PC-3 (cell line): ENCODE measurements at regions of chr3 and their contacts with region 1.

Region 1: DNA sequence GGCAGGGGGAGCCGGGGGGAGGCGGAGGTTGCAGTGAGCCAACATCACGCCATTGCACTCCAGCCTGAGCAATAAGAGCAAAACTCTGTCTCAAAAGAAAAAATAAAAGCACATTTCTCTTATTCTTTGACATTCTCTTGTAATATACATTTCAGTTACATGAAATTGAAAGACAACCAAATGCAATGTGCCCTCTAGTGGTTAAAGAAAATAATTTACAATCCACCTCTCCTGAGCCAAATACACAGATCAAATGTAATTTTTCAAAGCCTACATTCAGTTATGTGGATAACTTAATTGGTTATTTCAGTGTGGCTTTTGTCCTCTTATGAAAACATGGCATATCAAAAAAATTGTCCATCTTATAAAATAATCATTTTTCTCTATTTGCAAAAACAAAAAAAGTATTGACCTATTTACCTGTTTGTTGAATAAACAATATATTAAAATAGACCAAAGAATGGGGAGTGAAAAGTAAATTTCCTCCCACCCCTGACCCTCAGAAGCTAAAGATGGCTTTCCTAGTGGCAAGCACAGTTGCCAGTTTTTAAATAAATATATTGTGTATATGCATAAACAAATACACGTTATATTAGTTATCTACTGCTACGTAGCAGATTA is 14.2 kb upstream of the U2SURP start:
- DNase-seq: peak; percentile 66
- ATAC-seq: peak; percentile 53
- H3K4me3 ChIP-seq: no peak overlapping the region
- H3K27ac ChIP-seq: no peak overlapping the region
- H3K4me1 ChIP-seq: no peaks in the 10 kb centered on the region
- H3K27me3 ChIP-seq: no peaks in the 10 kb centered on the region
- CTCF ChIP-seq: peak; percentile 65

Region 2: GRCh38 chr3:142586803-142587406 is 400.3 kb before region 1 on chr3:
- CTCF ChIA-PET with region 1: interaction called, 3 read pairs
- POLR2A ChIA-PET with region 1: no interaction called
- intact Hi-C with region 1: loop called (anchors 2 kb)
- DNase-seq: peak; percentile 93
- ATAC-seq: peak; percentile 99
- H3K4me3 ChIP-seq: no peak overlapping the region
- H3K27ac ChIP-seq: no peak overlapping the region
- H3K4me1 ChIP-seq: peaks cover 9% of the 10 kb centered on the region; the same call in 1 of the 2 replicates
- H3K27me3 ChIP-seq: no peaks in the 10 kb centered on the region
- CTCF ChIP-seq: peak; percentile 75

Region 3: DNA sequence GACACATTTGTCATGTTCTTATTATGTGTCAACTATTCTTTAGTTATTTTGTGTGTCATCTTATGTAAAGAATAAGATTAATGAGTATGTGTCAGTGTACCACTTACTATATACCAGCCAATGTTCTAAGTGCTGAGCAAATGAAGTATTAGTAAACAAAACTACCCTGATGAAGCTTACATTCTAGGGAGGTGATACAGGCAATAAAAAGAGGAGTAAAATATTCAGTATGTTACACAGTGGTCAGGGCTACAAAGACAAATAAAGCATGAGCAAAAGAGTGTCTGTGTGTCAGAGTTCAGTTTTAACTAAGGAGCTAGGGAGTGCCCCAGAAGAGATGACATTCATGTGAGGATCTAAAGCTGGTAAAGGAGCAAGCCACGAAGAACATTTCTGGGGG is 184.3 kb before region 1 on chr3:
- CTCF ChIA-PET with region 1: no interaction called
- POLR2A ChIA-PET with region 1: no interaction called
- intact Hi-C with region 1: no loop called
- DNase-seq: peak; percentile 39
- ATAC-seq: peak; percentile 94
- H3K4me3 ChIP-seq: no peak overlapping the region
- H3K27ac ChIP-seq: peak overlapping the region; percentile 50
- H3K4me1 ChIP-seq: peaks cover 18% of the 10 kb centered on the region
- H3K27me3 ChIP-seq: no peaks in the 10 kb centered on the region
- CTCF ChIP-seq: no peak

Region 4: DNA sequence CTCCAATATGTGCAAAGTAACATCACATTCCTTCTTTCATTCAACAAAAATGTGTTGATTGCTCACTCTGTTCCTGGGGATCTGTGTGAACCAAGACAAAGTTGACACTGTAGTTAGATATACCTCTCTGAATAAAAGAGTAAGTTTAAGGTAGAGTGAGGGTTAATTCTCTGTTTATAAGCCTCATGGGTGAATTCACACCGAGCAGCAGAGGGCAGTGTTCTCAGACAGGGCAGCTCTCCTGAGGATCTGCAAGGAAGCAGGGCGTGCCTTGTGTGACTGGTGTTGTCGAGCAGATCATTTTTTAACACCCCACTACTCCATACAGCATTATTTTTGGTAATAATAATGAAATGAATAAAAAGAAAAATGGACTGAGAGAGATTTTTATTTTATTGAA is 58.1 kb before region 1 on chr3:
- CTCF ChIA-PET with region 1: no interaction called
- POLR2A ChIA-PET with region 1: no interaction called
- intact Hi-C with region 1: loop called (anchors 1 kb)
- DNase-seq: peak; percentile 70
- ATAC-seq: peak; percentile 65; the same call in 1 of the 2 replicates
- H3K4me3 ChIP-seq: no peak overlapping the region
- H3K27ac ChIP-seq: no peak overlapping the region
- H3K4me1 ChIP-seq: no peaks in the 10 kb centered on the region
- H3K27me3 ChIP-seq: no peaks in the 10 kb centered on the region
- CTCF ChIP-seq: peak; percentile 76

Region 5: DNA sequence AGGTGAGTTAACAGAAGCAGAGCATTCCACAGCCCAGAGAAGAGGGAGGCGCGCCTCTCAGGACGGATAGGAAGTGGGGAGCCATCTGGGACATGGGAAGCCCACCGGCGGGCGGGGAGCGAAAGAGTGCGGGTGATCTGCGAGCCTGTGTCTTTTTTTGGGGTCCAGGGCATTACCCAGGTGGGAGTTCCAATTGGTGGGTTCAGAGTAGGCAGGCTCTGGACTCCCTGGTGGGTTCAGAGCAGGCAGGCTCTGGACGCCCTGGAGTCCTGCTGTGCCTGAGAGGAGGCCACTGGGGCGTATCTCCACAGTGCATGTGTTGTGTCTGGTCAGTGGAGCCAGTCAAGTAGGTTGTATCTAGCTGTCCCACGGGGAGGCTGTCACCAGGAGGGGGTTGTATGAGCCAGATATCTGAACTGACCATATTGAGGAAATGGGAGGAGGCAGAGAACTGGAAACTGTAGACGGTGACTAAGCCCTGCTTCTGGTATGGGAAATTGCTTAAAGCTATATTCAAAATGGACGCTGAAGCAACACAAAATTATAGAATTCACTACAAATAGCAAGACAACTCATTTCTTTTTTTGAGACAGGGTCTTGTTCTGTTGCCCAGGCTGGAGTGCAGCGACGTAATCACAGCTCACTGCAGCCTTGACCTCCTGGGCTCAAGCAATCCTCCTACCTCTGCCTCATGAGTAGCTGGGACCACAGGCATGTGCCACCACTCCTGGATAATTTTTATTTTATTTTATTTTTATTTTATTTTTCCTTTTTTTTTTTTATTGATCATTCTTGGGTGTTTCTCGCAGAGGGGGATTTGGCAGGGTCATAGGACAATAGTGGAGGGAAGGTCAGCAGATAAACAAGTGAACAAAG is 97.9 kb after region 1 on chr3:
- CTCF ChIA-PET with region 1: no interaction called
- POLR2A ChIA-PET with region 1: no interaction called
- intact Hi-C with region 1: no loop called
- DNase-seq: peak; percentile 30
- ATAC-seq: peak; percentile 22; the same call in 1 of the 2 replicates
- H3K4me3 ChIP-seq: no peak overlapping the region
- H3K27ac ChIP-seq: no peak overlapping the region
- H3K4me1 ChIP-seq: no peaks in the 10 kb centered on the region
- H3K27me3 ChIP-seq: no peaks in the 10 kb centered on the region
- CTCF ChIP-seq: no peak